Activated B cell treated with CpG ODN at 0.5 μM for 24 hours (primary cell): ENCODE measurements at regions of chr10 and their contacts with region 1.

Region 1: GRCh38 chr10:70815504-70816219 is at the start of gene SGPL1:
- DNase-seq: peak; percentile 90
- ATAC-seq: peak; percentile 95
- H3K4me3 Mint-ChIP-seq: peak within 1 kb of the TSS; percentile 90
- H3K27ac Mint-ChIP-seq: peak within 1 kb of the TSS; percentile 82
- H3K4me1 Mint-ChIP-seq: peaks cover 26% of the 10 kb centered on the region
- H3K27me3 Mint-ChIP-seq: peaks cover 2% of the 10 kb centered on the region
- CTCF ChIP-seq: no peak
- total RNA-seq, gene SGPL1: 35.9 and 36.3 TPM in 2 replicates

Region 2: GRCh38 chr10:70233109-70233938 is 582.3 kb before region 1 on chr10 and contains the start of gene PPA1:
- CTCF ChIA-PET with region 1: no interaction called
- POLR2A ChIA-PET with region 1: no interaction called
- intact Hi-C with region 1: loop called (anchors 2 kb)
- DNase-seq: peak; percentile 100
- ATAC-seq: peak; percentile 96
- H3K4me3 Mint-ChIP-seq: peak within 1 kb of the TSS; percentile 92
- H3K27ac Mint-ChIP-seq: peak within 1 kb of the TSS; percentile 92
- H3K4me1 Mint-ChIP-seq: peaks cover 17% of the 10 kb centered on the region
- H3K27me3 Mint-ChIP-seq: no peaks in the 10 kb centered on the region
- CTCF ChIP-seq: no peak
- total RNA-seq, gene PPA1: 107 and 118 TPM in 2 replicates

Region 3: DNA sequence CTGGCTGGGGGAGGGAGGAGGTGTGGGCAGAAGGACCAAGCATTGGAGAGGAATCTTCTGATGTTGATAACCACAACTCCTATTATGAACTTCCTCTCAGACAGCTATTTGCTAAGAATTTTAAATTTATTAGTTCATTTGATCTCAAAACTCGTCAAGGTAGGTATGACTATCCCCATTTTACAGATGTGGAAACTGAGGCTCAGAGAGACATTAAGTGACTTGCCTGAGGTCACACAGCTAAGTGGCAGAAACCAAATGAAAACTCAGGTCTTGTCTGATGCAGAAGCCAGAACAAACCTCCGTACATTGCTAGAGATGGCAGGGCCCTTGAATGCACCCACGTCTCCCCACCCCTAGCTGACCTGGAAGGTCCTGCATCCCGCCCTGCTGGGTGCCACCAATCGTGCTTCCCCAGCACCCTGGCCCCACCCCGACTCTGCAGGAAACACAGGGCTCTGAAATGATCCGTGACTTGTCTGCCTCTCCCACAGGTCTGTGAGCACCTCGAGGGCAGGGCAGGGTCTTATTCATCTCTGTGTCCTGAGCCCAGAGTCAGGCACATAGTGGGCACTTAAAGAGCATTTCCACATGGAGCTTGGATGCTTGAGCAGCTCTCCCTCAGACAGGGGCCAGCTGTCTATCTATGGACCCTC is 342.7 kb before region 1 on chr10:
- CTCF ChIA-PET with region 1: no interaction called
- POLR2A ChIA-PET with region 1: no interaction called
- intact Hi-C with region 1: no loop called
- DNase-seq: no peak
- ATAC-seq: no peak
- H3K4me3 Mint-ChIP-seq: no peak overlapping the region
- H3K27ac Mint-ChIP-seq: no peak overlapping the region
- H3K4me1 Mint-ChIP-seq: peaks cover 10% of the 10 kb centered on the region
- H3K27me3 Mint-ChIP-seq: no peaks in the 10 kb centered on the region
- CTCF ChIP-seq: no peak

Region 4: GRCh38 chr10:70493660-70494234 is 321.9 kb before region 1 on chr10:
- CTCF ChIA-PET with region 1: no interaction called
- POLR2A ChIA-PET with region 1: no interaction called
- intact Hi-C with region 1: loop called (anchors 5 kb)
- DNase-seq: peak; percentile 55
- ATAC-seq: peak; percentile 74
- H3K4me3 Mint-ChIP-seq: peak overlapping the region; percentile 71
- H3K27ac Mint-ChIP-seq: peak overlapping the region; percentile 91
- H3K4me1 Mint-ChIP-seq: peaks cover 77% of the 10 kb centered on the region
- H3K27me3 Mint-ChIP-seq: no peaks in the 10 kb centered on the region
- CTCF ChIP-seq: no peak

Region 5: DNA sequence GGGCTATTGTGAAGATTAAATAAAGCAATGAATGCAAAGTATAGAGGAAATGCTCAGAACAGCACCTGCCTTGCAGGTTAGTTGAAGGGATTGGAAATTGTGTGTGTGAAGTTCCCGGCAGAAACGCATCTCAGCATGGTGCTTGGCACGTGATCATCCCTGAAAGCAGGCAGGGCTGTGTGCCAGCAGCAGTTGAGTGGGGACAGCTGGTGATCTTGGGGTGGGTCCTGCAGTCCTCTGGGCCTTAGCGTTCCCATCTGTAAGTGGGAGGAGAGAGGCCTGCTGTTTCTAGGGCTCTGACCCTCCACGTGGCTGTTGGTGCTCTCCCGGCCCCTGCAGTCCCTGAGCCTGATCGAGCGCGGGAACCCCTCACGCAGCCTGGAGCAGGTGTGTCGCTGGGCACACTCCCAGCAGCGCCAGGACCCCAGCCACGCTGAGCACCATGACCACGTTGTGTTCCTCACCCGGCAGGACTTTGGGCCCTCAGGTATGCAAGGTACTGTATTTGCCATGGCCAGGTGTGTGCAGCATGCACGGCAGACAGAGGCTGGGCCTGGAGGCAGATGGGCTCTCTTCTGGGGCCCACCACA is 85.8 kb before region 1 on chr10:
- CTCF ChIA-PET with region 1: no interaction called
- POLR2A ChIA-PET with region 1: no interaction called
- intact Hi-C with region 1: no loop called
- DNase-seq: no peak
- ATAC-seq: no peak
- H3K4me3 Mint-ChIP-seq: no peak overlapping the region
- H3K27ac Mint-ChIP-seq: no peak overlapping the region
- H3K4me1 Mint-ChIP-seq: no peaks in the 10 kb centered on the region
- H3K27me3 Mint-ChIP-seq: no peaks in the 10 kb centered on the region
- CTCF ChIP-seq: no peak

Region 6: GRCh38 chr10:70827086-70827757 is 11.6 kb after region 1 on chr10:
- CTCF ChIA-PET with region 1: no interaction called
- POLR2A ChIA-PET with region 1: interaction called, 4 read pairs
- intact Hi-C with region 1: loop called (anchors 1 kb)
- DNase-seq: no peak
- ATAC-seq: no peak
- H3K4me3 Mint-ChIP-seq: no peak overlapping the region
- H3K27ac Mint-ChIP-seq: no peak overlapping the region
- H3K4me1 Mint-ChIP-seq: peaks cover 7% of the 10 kb centered on the region
- H3K27me3 Mint-ChIP-seq: no peaks in the 10 kb centered on the region
- CTCF ChIP-seq: no peak

Region 7: GRCh38 chr10:70880077-70880534 is 64.4 kb after region 1 on chr10:
- CTCF ChIA-PET with region 1: interaction called, 8 read pairs
- POLR2A ChIA-PET with region 1: no interaction called
- intact Hi-C with region 1: loop called (anchors 1 kb)
- DNase-seq: peak; percentile 40
- ATAC-seq: peak; percentile 96
- H3K4me3 Mint-ChIP-seq: no peak overlapping the region
- H3K27ac Mint-ChIP-seq: peak overlapping the region; percentile 25
- H3K4me1 Mint-ChIP-seq: peaks cover 4% of the 10 kb centered on the region
- H3K27me3 Mint-ChIP-seq: no peaks in the 10 kb centered on the region
- CTCF ChIP-seq: peak; percentile 84

Region 8: DNA sequence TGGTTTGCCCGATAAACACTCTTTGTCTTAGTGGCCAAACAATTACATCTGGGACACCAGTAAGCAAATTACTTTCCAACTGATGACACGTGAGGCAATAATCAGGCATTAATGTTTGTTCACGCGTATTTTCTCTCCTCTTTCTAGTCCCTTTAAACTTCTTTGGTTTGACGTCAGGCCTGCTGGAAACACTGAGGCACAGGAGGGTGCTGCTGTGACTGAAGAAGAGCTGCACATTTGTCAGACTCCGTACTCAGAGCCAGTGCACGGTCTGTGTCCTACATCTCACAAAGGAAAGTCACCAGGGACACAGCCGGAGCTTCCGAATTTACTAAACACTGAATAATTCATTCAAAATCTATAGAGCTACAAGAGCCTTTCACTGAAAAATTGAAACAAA is 1342.5 kb after region 1 on chr10:
- CTCF ChIA-PET with region 1: no interaction called
- POLR2A ChIA-PET with region 1: no interaction called
- intact Hi-C with region 1: no loop called
- DNase-seq: no peak
- ATAC-seq: no peak
- H3K4me3 Mint-ChIP-seq: no peak overlapping the region
- H3K27ac Mint-ChIP-seq: no peak overlapping the region
- H3K4me1 Mint-ChIP-seq: peaks cover 5% of the 10 kb centered on the region
- H3K27me3 Mint-ChIP-seq: no peaks in the 10 kb centered on the region
- CTCF ChIP-seq: no peak